H1 (cell line): ENCODE measurements at regions of chr10 and their contacts with region 1.

Region 1: GRCh38 chr10:96292971-96293920 is 11.0 kb upstream of the DNTT start:
- DNase-seq: no peak
- H3K4me3 ChIP-seq: no peak overlapping the region
- H3K27ac ChIP-seq: no peak overlapping the region
- H3K4me1 ChIP-seq: no peaks in the 10 kb centered on the region
- H3K27me3 ChIP-seq: no peaks in the 10 kb centered on the region
- CTCF ChIP-seq: peak in 2 of 3 experiments; percentile 58 to 61; a peak in 3 of 4 replicates
- EP300 ChIP-seq: no peak
- POLR2A ChIP-seq: no peak
- RAD21 ChIP-seq: peak; percentile 68 to 82

Region 2: DNA sequence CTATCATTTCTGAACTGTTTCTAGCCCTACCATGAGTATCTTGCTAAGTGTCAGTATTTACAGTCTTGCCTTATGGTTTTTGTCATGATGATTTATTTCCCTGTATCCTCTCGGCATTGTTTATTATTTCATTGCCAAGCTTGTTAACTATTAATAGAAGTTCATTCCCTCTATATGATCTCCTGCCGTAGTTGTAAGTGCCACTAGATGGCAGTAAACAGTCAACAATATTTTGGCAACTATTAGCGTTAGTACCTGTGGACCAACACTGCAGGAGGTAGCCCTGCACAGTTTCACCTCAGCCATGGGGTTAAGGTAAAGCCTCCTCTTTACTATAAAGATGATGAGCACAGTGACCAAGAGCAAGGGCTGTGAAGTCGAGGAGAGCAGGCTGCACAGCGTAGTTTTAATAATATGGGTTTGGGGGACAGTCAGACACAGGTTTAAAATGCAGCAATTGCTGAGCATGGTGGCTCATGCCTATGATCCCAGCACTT is 276.0 kb before region 1 on chr10:
- CTCF ChIA-PET with region 1: interaction called, 14 read pairs
- POLR2A ChIA-PET with region 1: no interaction called
- DNase-seq: peak in 1 of 2 experiments; percentile 54
- H3K4me3 ChIP-seq: no peak overlapping the region
- H3K27ac ChIP-seq: no peak overlapping the region
- H3K4me1 ChIP-seq: no peaks in the 10 kb centered on the region
- H3K27me3 ChIP-seq: no peaks in the 10 kb centered on the region
- CTCF ChIP-seq: peak in 2 of 3 experiments; percentile 62 to 70; a peak in 3 of 4 replicates
- EP300 ChIP-seq: no peak
- POLR2A ChIP-seq: no peak
- RAD21 ChIP-seq: peak; percentile 83 to 86

Region 3: DNA sequence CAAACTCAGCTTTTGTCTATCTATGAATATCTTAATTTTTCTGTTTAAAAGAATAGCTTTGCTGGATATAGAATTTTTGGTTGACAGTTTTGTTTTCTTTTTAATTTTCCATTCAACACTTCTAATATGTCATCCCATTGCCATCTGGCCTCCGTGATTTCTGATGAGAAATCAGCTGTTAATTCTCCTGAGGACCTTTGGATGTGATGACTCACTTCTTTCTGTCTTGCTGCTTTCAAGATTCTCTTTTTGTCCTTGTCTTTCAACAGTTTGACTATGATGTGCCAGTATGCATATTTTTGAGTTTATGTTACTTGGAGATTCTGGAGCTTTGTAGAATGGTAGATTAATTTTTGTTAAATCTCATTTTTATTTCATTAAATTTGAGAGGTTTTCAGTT is 124.7 kb before region 1 on chr10:
- CTCF ChIA-PET with region 1: no interaction called
- POLR2A ChIA-PET with region 1: no interaction called
- DNase-seq: no peak
- H3K4me3 ChIP-seq: no peak overlapping the region
- H3K27ac ChIP-seq: no peak overlapping the region
- H3K4me1 ChIP-seq: no peaks in the 10 kb centered on the region
- H3K27me3 ChIP-seq: no peaks in the 10 kb centered on the region
- CTCF ChIP-seq: no peak
- EP300 ChIP-seq: no peak
- POLR2A ChIP-seq: no peak
- RAD21 ChIP-seq: no peak

Region 4: GRCh38 chr10:96271016-96271829 is 22.0 kb before region 1 on chr10 and contains the start of gene BLNK:
- CTCF ChIA-PET with region 1: interaction called, 11 read pairs
- POLR2A ChIA-PET with region 1: interaction called, 3 read pairs
- DNase-seq: no peak
- H3K4me3 ChIP-seq: no peak within 1 kb of the TSS
- H3K27ac ChIP-seq: no peak within 1 kb of the TSS
- H3K4me1 ChIP-seq: no peaks in the 10 kb centered on the region
- H3K27me3 ChIP-seq: no peaks in the 10 kb centered on the region
- CTCF ChIP-seq: no peak
- EP300 ChIP-seq: no peak
- POLR2A ChIP-seq: no peak
- RAD21 ChIP-seq: no peak
- total RNA-seq, gene BLNK: not detected in 2 replicates

Region 5: DNA sequence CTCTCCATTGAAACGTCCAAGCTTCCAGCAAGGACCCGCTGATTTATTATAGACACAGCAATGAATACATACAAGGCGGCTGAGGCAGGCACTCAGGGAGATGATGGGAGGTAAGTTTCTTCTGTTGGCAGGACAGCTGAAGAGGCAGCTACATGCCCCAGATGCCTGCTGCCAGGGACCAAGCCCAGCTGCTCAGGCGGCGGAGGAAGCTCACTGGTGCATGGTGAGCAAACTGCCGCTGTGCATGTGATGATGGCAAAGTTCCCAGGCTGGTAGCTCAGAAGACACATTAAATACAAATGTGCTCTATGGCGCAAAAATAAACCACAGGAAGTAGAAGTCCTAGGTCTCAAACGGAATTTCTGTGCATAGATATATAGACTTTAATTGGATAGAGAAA is 13.3 kb after region 1 on chr10:
- CTCF ChIA-PET with region 1: interaction called, 33 read pairs
- POLR2A ChIA-PET with region 1: interaction called, 4 read pairs
- DNase-seq: no peak
- H3K4me3 ChIP-seq: no peak overlapping the region
- H3K27ac ChIP-seq: no peak overlapping the region
- H3K4me1 ChIP-seq: peaks cover 3 to 24% (median 22%) of the 10 kb centered on the region in 4 experiments
- H3K27me3 ChIP-seq: no peaks in the 10 kb centered on the region
- CTCF ChIP-seq: no peak
- EP300 ChIP-seq: no peak
- POLR2A ChIP-seq: no peak
- RAD21 ChIP-seq: no peak

Region 6: DNA sequence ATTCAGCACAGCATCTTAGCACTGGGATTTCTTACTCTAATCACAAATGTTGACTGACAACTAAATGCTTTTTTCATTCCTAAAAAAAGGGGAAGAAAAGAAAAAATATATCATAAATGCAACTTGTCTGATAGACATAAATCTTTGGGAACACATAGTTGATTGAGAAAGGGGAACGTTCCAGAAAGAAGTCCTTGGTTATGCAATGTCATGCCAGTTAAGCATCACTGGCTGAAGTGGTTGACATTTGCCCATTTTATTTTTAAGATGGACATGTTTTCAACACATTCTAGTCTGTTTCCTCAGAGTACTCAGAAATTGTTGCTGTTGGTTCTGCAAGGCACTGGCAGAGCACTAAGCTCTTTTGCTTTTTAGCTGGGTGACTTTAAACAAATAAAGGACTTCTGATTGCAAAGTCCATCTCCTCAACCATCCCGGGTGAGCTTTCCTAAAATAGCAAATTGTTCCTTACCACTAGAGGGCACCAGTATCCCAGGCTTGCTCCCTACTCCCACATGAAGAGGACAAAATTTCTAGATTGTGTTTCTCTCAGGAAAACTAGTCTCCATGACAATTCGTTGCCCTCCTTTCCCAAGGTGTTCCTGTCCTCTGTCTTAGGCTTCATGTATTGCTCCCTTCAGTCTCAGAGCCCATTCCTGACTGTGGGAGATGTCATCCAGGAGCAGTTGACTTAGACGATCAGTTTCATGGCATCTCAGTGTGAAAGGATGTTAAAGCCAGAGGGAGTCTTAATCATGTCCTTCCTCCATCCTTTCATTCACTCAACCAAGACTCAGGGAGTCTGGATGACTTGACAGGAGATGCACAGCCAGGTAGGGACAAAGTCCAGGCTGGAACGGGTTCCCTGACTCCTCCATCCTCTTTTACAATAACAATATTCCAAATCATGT is 41.6 kb after region 1 on chr10:
- CTCF ChIA-PET with region 1: interaction called, 17 read pairs
- POLR2A ChIA-PET with region 1: no interaction called
- DNase-seq: peak in 1 of 2 experiments; percentile 50
- H3K4me3 ChIP-seq: no peak overlapping the region
- H3K27ac ChIP-seq: no peak overlapping the region
- H3K4me1 ChIP-seq: peaks cover 0 to 2% (median 1%) of the 10 kb centered on the region in 4 experiments; a peak in 1 of 7 replicates
- H3K27me3 ChIP-seq: 0 out of 7 replicates have a peak, but pooled peaks cover 0 to 1% (median 0%) of the 10 kb centered on the region in 4 experiments
- CTCF ChIP-seq: peak in 2 of 3 experiments; percentile 80 to 85; a peak in 3 of 4 replicates
- EP300 ChIP-seq: no peak; a peak in 1 of 3 replicates
- POLR2A ChIP-seq: no peak
- RAD21 ChIP-seq: peak; percentile 79 to 85

Region 7: DNA sequence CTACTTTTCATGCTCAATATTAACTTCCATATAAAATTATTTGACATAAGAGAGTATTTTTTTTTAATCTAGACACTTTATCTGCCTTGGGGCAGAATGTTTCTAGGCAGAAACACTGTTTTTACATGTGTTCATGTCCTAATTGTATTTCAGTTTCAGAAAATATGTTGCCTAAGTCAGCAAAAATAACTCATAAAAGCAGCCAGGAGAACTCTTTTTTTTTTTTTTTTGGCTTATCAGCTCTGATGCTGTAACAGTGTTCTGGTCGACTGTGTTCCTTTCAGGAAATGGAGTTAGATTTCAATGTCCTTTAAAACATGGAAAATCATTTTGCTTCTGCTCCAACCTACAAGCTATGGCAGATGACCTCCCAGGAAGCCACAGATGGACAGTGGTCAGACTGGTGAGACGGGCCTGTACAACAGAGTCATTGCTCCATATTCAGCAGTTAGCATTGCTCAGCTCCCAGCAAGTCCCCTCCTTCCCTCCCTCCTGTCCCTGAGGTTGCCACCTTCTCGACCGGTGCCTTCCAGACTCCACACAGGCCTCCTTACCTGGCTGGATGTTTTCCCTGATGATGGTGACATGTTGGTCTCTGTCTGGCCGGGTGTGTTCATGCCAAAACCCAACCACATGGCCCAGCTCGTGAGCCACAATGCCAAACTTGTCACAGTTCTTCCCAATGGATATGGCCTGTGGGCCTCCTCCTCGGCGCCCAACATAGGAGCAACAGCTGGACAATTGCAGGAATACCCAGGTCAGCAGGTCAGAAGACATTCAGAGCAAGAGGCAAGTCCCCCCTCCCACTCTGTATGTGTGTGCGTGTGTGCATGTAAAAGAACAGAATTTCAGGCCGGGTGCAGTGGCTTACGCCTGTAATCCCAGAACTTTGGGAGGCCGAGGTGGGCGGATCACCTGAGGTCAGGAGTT is 129.0 kb after region 1 on chr10:
- CTCF ChIA-PET with region 1: no interaction called
- POLR2A ChIA-PET with region 1: no interaction called
- DNase-seq: peak in 1 of 2 experiments; percentile 30
- H3K4me3 ChIP-seq: no peak overlapping the region
- H3K27ac ChIP-seq: no peak overlapping the region
- H3K4me1 ChIP-seq: no peaks in the 10 kb centered on the region
- H3K27me3 ChIP-seq: no peaks in the 10 kb centered on the region
- CTCF ChIP-seq: no peak
- EP300 ChIP-seq: no peak
- POLR2A ChIP-seq: no peak
- RAD21 ChIP-seq: no peak

Region 8: GRCh38 chr10:96448021-96448457 is 154.8 kb after region 1 on chr10:
- CTCF ChIA-PET with region 1: no interaction called
- POLR2A ChIA-PET with region 1: no interaction called
- DNase-seq: no peak
- H3K4me3 ChIP-seq: no peak overlapping the region
- H3K27ac ChIP-seq: no peak overlapping the region
- H3K4me1 ChIP-seq: peaks cover 25 to 32% (median 25%) of the 10 kb centered on the region in 4 experiments
- H3K27me3 ChIP-seq: no peaks in the 10 kb centered on the region
- CTCF ChIP-seq: no peak
- EP300 ChIP-seq: no peak
- POLR2A ChIP-seq: no peak
- RAD21 ChIP-seq: no peak